ENCODE measurements at regions of chr11 and their contacts with region 1.

Region 1: DNA sequence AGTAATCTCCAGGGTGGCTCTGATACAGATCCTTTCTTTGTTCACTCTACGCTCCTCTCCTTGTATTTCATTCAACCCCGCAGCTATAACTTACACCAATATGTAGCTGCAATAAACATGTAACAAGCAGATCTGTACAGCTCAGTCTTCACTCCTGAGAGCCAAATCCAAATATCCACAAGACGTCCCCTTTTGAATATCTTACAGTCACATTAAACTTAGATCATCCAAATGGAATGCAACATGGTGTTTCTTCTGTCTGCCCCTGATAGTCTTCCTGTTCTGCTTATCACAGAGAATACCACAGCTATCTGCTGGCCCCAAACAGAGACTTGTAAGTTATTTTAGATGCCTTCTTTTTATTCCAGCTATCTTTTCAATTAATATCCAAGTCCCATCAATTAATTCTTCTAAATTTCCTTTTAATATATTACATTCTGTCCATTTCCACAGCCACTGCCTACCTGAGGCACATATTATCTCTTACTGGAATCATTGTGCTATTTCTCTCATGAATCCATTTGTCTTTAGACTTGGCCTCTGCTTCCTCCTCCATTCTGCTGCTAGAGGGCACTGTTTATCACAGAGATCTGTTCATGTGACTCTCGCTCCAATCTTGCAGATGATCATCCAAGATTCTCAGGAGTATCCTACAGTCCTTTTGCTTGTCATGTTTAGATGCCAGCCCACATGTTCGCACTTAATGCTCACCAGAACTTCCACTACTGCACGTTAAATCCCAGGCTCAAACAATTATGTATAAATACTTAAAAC is 908.6 kb downstream of the NTM start:
- DNase-seq: peak; percentile 4
- H3K4me3 ChIP-seq: no peak overlapping the region
- H3K27ac ChIP-seq: no peak overlapping the region
- H3K4me1 ChIP-seq: no peaks in the 10 kb centered on the region
- H3K27me3 ChIP-seq: no peaks in the 10 kb centered on the region
- CTCF ChIP-seq: peak in 1 of 2 donors; percentile 37
- POLR2A ChIP-seq: no peak

Region 2: DNA sequence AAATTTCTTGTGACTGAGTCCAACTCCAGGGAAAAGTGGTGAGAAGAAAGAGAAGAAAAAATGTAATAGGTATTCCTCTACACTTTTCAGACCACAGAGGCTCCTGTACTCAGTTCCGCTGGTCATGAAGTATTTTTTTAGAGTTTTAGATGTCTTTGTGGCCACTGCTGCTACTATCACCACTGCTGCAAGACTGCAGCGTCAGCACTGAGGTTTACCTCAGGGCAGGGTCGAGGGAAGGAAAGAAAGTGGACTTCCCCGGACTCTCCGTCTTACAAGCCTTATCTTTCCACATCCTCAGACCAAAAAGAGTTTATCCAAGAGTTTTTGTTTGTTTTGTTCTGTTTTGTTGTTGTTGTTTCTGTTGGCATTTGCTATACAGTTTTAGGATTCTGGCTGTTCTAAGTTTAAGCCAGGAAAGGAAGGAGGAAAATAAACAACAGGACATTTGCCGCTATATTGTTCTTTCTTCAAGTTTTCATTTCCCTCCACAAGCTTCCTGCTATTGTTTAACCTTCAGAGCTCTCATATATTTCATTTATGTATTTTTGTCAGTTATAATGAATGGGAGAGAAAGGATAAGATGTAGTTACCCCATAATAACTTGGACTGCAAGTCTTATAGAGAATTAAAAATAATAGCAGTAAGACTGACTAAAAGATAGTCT is 10.7 kb after region 1 on chr11:
- CTCF ChIA-PET with region 1: no interaction called
- POLR2A ChIA-PET with region 1: no interaction called
- dilution Hi-C with region 1: no loop called
- intact Hi-C with region 1: no loop called
- DNase-seq: peak; percentile 25
- H3K4me3 ChIP-seq: peak overlapping the region in 1 of 3 experiments; percentile 34
- H3K27ac ChIP-seq: peak overlapping the region; percentile 26
- H3K4me1 ChIP-seq: peaks cover 18% of the 10 kb centered on the region
- H3K27me3 ChIP-seq: no peaks in the 10 kb centered on the region
- CTCF ChIP-seq: no peak
- POLR2A ChIP-seq: no peak

Region 3: GRCh38 chr11:132312701-132313111 is 33.7 kb after region 1 on chr11:
- CTCF ChIA-PET with region 1: no interaction called
- POLR2A ChIA-PET with region 1: no interaction called
- dilution Hi-C with region 1: no loop called
- intact Hi-C with region 1: loop called (anchors 2 kb)
- DNase-seq: no peak
- H3K4me3 ChIP-seq: no peak overlapping the region
- H3K27ac ChIP-seq: no peak overlapping the region
- H3K4me1 ChIP-seq: peaks cover 3% of the 10 kb centered on the region
- H3K27me3 ChIP-seq: no peaks in the 10 kb centered on the region
- CTCF ChIP-seq: peak; percentile 27 to 47
- POLR2A ChIP-seq: no peak

Region 4: GRCh38 chr11:132941024-132941646 is 662.1 kb after region 1 on chr11:
- CTCF ChIA-PET with region 1: interaction called, 12 read pairs
- POLR2A ChIA-PET with region 1: no interaction called
- dilution Hi-C with region 1: no loop called
- intact Hi-C with region 1: loop called (anchors 1 kb)
- DNase-seq: peak; percentile 19
- H3K4me3 ChIP-seq: no peak overlapping the region
- H3K27ac ChIP-seq: no peak overlapping the region
- H3K4me1 ChIP-seq: no peaks in the 10 kb centered on the region
- H3K27me3 ChIP-seq: peaks cover 10 to 17% of the 10 kb centered on the region in 2 experiments
- CTCF ChIP-seq: peak; percentile 67 to 71
- POLR2A ChIP-seq: no peak

Measured in endothelial cell of umbilical vein (primary cell).